WTC11 (cell line): ENCODE measurements at regions of chr12 and their contacts with region 1.

Region 1: DNA sequence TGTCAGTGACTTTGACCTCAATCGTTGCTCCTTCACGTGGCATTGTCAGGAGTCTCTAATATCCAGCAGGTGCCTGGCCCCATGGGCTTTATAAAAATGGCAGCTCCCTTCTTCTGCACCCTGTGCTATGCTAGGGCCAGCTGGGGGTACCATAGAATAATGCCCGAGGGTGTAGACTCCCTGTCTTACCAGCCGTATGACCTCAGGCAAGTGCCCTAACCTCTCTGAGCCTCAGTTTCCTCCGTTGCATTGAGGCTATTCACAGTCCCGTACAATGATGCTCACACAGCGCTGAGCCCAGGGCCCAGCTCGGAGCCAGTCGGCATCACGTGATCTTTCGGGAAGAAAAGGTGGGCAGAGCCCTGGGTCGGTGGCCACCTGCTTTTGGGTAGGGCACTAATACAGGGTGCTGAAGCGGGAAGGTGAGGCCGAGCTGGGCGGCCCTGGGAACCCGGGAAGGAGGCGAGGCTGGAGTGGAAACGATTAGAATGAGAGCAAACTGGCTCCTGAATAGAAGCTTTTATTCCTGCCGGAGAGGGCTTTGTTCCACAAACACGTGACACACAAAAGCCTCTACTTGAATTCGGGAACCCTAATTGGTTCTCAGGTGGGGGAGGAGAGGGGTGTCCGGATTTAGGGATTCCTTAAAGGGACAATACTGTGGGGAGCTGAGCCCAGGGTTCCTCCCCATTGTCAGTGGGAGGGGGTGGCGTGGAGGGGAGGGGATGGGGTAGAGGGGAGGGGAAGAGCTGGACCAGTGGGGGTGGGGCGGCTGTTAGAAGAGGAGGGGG is 19.9 kb upstream of the MSI1 start:
- DNase-seq: peak; percentile 79
- ATAC-seq: peak; percentile 87
- H3K4me3 Mint-ChIP-seq: peak overlapping the region; percentile 66
- H3K27ac Mint-ChIP-seq: peak overlapping the region; percentile 96
- H3K4me1 Mint-ChIP-seq: peaks cover 33% of the 10 kb centered on the region
- H3K27me3 Mint-ChIP-seq: no peaks in the 10 kb centered on the region
- CTCF ChIP-seq: no peak

Region 2: GRCh38 chr12:120402217-120402616 is 13.3 kb after region 1 on chr12:
- CTCF ChIA-PET with region 1: no interaction called
- POLR2A ChIA-PET with region 1: interaction called, 12 read pairs
- DNase-seq: peak; percentile 61
- ATAC-seq: peak; percentile 87
- H3K4me3 Mint-ChIP-seq: peak overlapping the region; percentile 56
- H3K27ac Mint-ChIP-seq: peak overlapping the region; percentile 94
- H3K4me1 Mint-ChIP-seq: peaks cover 23% of the 10 kb centered on the region
- H3K27me3 Mint-ChIP-seq: no peaks in the 10 kb centered on the region
- CTCF ChIP-seq: no peak